ENCODE measurements at regions of chr20 and their contacts with region 1.

Region 1: GRCh38 chr20:3502878-3503277 is 32.1 kb downstream of the ATRN start:
- DNase-seq: no peak
- H3K4me3 ChIP-seq: no peak overlapping the region
- H3K27ac ChIP-seq: no peak overlapping the region
- H3K4me1 ChIP-seq: no peaks in the 10 kb centered on the region
- H3K27me3 ChIP-seq: no peaks in the 10 kb centered on the region
- CTCF ChIP-seq: no peak

Region 2: DNA sequence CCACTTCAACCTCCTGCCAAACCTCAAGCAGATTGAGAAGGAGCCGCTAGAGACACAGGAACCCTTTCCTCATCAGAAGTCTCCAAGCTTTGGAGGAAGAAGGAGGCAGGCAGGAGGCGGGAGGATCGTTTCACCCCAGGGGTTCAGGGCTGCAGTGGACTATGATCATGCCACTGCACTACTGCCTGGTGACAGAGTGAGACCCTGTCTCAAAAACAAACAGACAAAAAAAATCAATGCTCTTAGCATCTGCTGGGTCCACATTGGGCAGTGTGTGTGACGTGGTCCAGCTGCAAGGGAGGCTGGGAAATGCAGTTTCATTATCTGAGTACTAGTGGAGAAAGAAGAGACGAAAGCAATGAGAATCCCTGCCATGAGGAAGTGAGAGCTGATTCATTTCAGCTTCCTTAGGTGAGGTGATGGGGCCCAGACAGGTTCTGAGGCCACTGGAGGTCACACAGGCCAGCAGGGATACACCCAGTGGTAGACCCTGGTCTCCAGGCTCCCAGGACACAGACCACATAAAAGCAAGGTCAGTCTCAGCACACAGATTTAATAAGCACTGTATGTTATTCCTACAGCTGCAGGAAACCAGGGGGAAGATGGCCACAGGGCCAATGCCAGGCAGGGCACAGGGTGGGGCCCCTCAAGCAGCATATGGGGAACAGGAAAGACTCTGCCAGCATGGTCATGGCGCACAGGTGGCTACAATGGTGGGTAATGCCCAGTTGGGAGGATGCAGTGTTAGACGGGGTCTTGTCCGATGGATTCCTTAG is 156.0 kb after region 1 on chr20:
- CTCF ChIA-PET with region 1: no interaction called
- POLR2A ChIA-PET with region 1: interaction called, 12 read pairs
- intact Hi-C with region 1: no loop called
- DNase-seq: no peak
- H3K4me3 ChIP-seq: no peak overlapping the region
- H3K27ac ChIP-seq: no peak overlapping the region
- H3K4me1 ChIP-seq: no peaks in the 10 kb centered on the region
- H3K27me3 ChIP-seq: no peaks in the 10 kb centered on the region
- CTCF ChIP-seq: no peak